ENCODE measurements at regions of chr20 and their contacts with region 1.

Region 1: GRCh38 chr20:10511509-10512251 is 76.6 kb downstream of the SLX4IP start:
- DNase-seq: peak; percentile 15 to 60 (median 40)
- H3K4me3 ChIP-seq: no peak overlapping the region
- H3K4me3 Mint-ChIP-seq: peak overlapping the region in 7 of 8 donors; percentile 13 to 72 (median 37)
- H3K27ac ChIP-seq: no peak overlapping the region
- H3K27ac Mint-ChIP-seq: peak overlapping the region in 5 of 7 donors; percentile 12 to 77 (median 60)
- H3K4me1 ChIP-seq: peaks cover 15% of the 10 kb centered on the region
- H3K4me1 Mint-ChIP-seq: peaks cover 13 to 22% (median 17%) of the 10 kb centered on the region in 4 donors
- H3K27me3 ChIP-seq: no peaks in the 10 kb centered on the region
- H3K27me3 Mint-ChIP-seq: no peaks in the 10 kb centered on the region

Region 2: DNA sequence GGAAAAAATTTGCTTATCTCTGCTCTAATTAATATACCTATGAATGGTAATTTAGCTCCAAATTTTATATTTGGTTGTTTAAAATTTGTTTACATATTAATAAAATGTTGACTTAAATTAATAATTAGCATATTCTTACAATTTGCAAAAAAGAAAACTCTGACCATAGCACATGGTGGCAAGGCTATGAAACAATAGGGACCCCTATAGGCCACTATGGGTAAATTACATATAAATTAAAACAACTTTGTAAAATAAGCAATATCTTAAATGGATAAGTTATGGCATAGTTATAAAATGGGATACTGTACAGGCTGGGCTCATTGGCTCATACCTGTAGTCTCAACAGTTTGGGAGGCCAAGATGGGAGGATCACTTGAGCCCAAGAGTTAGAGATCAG is 153.7 kb before region 1 on chr20:
- CTCF ChIA-PET with region 1: no interaction called
- POLR2A ChIA-PET with region 1: no interaction called
- intact Hi-C with region 1: no loop called
- DNase-seq: no peak
- H3K4me3 ChIP-seq: no peak overlapping the region
- H3K4me3 Mint-ChIP-seq: no peak overlapping the region
- H3K27ac ChIP-seq: no peak overlapping the region
- H3K27ac Mint-ChIP-seq: no peak overlapping the region
- H3K4me1 ChIP-seq: peaks cover 6% of the 10 kb centered on the region
- H3K4me1 Mint-ChIP-seq: peaks cover 3 to 5% (median 4%) of the 10 kb centered on the region in 4 donors
- H3K27me3 ChIP-seq: no peaks in the 10 kb centered on the region
- H3K27me3 Mint-ChIP-seq: no peaks in the 10 kb centered on the region

Region 3: DNA sequence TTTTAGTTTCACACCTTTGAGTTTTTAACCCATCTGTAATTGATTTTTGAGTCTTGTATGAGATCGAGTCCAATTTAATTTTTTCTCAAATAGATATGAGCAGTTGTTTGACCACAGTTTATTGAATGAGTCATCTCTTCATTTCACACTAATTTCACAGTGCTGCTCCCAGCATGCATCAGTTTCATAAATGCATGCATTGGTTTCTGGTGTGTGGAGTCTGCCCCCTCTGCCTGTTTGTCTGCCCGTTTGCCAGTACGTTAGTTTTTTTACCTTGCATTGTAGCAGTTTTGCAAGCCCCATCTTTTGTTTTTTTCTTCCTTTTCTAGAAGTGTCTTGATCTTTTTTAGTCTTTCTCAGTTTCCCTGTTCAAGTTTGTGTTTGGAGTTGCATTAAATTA is 64.7 kb before region 1 on chr20:
- CTCF ChIA-PET with region 1: no interaction called
- POLR2A ChIA-PET with region 1: no interaction called
- intact Hi-C with region 1: loop called (anchors 5 kb)
- DNase-seq: peak; percentile 26 to 74 (median 37)
- H3K4me3 ChIP-seq: no peak overlapping the region
- H3K4me3 Mint-ChIP-seq: peak overlapping the region; percentile 47 to 89 (median 76)
- H3K27ac ChIP-seq: no peak overlapping the region
- H3K27ac Mint-ChIP-seq: peak overlapping the region; percentile 9 to 88 (median 28)
- H3K4me1 ChIP-seq: peaks cover 16% of the 10 kb centered on the region
- H3K4me1 Mint-ChIP-seq: peaks cover 15 to 24% (median 17%) of the 10 kb centered on the region in 4 donors
- H3K27me3 ChIP-seq: no peaks in the 10 kb centered on the region
- H3K27me3 Mint-ChIP-seq: no peaks in the 10 kb centered on the region

Region 4: DNA sequence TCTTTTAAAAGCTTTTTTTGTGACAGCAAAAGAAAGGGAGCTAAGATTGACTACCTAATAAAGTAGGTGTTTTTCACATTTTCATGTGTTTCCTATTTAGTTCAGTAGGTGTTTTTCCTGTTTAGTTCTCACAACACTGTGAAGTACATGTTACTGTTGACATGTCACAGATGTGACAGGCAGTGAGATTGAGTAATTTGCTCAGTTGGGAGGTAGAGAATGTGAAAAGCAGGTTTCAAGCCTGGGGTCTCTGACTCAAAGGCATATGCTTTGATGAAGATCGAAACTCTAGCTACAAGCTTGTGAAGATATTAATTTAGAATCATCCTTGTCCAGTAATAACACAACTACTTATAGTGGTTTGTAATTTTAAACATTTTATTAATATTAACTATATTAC is 33.5 kb before region 1 on chr20:
- CTCF ChIA-PET with region 1: no interaction called
- POLR2A ChIA-PET with region 1: no interaction called
- intact Hi-C with region 1: no loop called
- DNase-seq: no peak
- H3K4me3 ChIP-seq: no peak overlapping the region
- H3K4me3 Mint-ChIP-seq: no peak overlapping the region
- H3K27ac ChIP-seq: no peak overlapping the region
- H3K27ac Mint-ChIP-seq: no peak overlapping the region
- H3K4me1 ChIP-seq: peaks cover 18% of the 10 kb centered on the region
- H3K4me1 Mint-ChIP-seq: peaks cover 12 to 18% (median 14%) of the 10 kb centered on the region in 4 donors
- H3K27me3 ChIP-seq: no peaks in the 10 kb centered on the region
- H3K27me3 Mint-ChIP-seq: no peaks in the 10 kb centered on the region